ENCODE measurements at regions of chr1 and their contacts with region 1.

Region 1: GRCh38 chr1:54499360-54500106 is 48.5 kb upstream of the ACOT11 start:
- DNase-seq: no peak
- ATAC-seq: peak; percentile 78

Region 2: DNA sequence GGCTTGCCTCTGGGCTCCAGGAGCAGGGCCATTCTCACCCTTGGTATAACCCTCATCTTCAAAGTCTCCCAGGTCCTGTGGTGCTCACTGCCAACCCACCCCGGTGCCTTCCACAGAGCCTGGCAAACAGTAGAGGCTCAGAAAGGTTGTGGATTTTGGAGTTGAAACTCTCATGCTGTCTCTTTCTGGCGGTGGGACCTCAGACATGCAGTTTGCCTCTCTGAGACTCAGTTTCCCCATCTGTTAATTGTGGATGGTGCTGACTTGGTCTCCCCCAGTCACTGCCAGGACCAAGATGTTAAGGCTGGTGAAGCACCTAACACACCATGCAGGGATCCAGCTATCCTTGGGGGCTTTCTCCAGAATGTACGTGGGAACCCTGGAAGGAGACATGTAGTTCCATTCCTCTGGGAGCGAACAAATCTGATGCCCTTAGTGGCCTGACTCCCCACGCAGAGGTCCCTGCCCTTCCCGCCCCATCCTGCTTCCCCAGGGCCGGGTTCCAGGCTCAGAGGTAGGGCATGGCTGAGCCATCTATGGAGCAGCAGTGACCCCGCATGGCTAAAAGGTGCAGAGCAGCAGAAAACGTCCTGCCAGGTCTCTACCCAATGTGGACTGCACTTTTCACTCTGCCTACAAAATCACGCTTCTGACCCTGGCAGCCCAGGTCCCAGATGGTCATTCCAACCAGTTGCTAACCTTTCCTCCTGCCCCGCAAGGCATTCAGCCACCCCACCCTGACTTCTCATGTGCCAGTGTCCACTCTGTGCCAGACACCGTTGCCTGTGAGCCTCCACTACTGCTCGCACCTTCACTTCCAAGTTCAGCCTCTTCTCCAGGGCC is 310.8 kb after region 1 on chr1:
- intact Hi-C with region 1: loop called (anchors 10 kb)
- DNase-seq: peak; percentile 68
- ATAC-seq: peak; percentile 92

Measured in Right ventricle myocardium superior (tissue), 1 donor.